ENCODE measurements at regions of chr14 and their contacts with region 1.

Region 1: GRCh38 chr14:106185837-106186233 is 659.5 kb downstream of the TMEM121 start:
- DNase-seq: peak; percentile 70
- ATAC-seq: peak; percentile 72
- H3K4me3 Mint-ChIP-seq: peak overlapping the region; percentile 34
- H3K27ac Mint-ChIP-seq: peak overlapping the region; percentile 83
- H3K4me1 Mint-ChIP-seq: peaks cover 40% of the 10 kb centered on the region
- H3K27me3 Mint-ChIP-seq: peaks cover 12% of the 10 kb centered on the region

Region 2: GRCh38 chr14:106200541-106201315 is 14.9 kb after region 1 on chr14:
- CTCF ChIA-PET with region 1: interaction called, 35 read pairs
- POLR2A ChIA-PET with region 1: no interaction called
- DNase-seq: peak; percentile 44
- ATAC-seq: peak; percentile 63
- H3K4me3 Mint-ChIP-seq: peak overlapping the region; percentile 48
- H3K27ac Mint-ChIP-seq: peak overlapping the region; percentile 46
- H3K4me1 Mint-ChIP-seq: peaks cover 18% of the 10 kb centered on the region
- H3K27me3 Mint-ChIP-seq: peaks cover 24% of the 10 kb centered on the region

Region 3: DNA sequence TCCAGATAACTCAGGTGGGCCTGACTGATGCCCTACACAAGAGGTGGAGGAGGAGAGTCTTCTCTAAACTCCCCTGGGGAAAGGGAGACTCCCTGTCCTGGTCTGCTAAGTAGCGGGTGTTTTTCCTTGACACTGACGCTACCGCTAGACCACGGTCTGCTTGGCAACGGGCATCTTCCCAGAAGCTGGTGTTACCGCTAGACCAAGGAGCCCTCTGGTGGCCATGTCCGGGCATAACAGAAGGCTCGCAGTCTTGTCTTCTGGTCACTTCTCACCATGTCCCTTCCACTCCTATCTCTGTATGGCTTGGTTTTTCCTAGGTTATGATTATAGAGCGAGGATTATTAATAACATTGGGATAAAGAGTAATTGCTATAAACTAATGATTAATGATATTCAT is 306.0 kb after region 1 on chr14:
- CTCF ChIA-PET with region 1: no interaction called
- POLR2A ChIA-PET with region 1: no interaction called
- DNase-seq: peak; percentile 47
- ATAC-seq: no peak
- H3K4me3 Mint-ChIP-seq: no peak overlapping the region
- H3K27ac Mint-ChIP-seq: no peak overlapping the region
- H3K4me1 Mint-ChIP-seq: peaks cover 34% of the 10 kb centered on the region
- H3K27me3 Mint-ChIP-seq: peaks cover 2% of the 10 kb centered on the region